Mucosa of descending colon (tissue), 3 donors: ENCODE measurements at regions of chr7 and their contacts with region 1.

Region 1: DNA sequence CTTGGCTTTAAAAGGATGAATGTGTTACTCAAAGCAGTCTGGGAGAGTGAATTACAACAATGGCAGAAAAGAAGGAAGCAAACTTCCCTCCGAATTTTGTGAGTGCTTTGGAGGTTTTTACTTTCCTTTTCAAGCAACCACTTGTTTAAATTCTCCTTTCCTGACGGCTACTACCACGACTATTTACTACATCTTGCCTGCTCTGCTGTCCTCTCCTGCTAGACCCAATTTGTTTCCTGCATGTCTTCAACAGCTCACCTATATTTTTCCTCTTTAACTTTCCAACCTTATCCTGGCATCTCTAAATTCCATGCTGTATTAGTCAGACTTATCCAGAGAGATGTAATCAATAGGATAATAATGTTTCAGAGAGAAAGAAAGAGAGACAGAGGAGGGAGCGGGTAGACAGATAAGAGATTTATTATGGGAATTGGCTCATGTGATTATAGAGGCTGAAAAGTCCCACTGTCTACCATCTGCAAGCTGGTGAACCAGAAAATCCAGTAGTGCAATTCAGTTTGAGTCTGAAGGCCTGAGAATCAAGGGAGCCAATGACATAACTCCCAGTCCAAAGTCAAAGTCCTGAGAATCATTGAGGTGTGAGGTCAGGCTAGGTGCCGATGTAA is 42.8 kb upstream of the SLC13A1 start:
- DNase-seq: peak in 1 of 3 donors; percentile 58
- ATAC-seq: peak; percentile 94
- H3K4me3 ChIP-seq: no peak overlapping the region
- H3K4me1 ChIP-seq: peaks cover 9% of the 10 kb centered on the region
- CTCF ChIP-seq: no peak

Region 2: GRCh38 chr7:123674399-123675180 is 432.0 kb after region 1 on chr7:
- intact Hi-C with region 1: loop called in 1 of 2 experiments (anchors 10 kb)
- DNase-seq: no peak
- ATAC-seq: no peak
- H3K4me3 ChIP-seq: no peak overlapping the region
- H3K4me1 ChIP-seq: no peaks in the 10 kb centered on the region
- CTCF ChIP-seq: no peak